ENCODE measurements at regions of chr9 and their contacts with region 1.

Region 1: DNA sequence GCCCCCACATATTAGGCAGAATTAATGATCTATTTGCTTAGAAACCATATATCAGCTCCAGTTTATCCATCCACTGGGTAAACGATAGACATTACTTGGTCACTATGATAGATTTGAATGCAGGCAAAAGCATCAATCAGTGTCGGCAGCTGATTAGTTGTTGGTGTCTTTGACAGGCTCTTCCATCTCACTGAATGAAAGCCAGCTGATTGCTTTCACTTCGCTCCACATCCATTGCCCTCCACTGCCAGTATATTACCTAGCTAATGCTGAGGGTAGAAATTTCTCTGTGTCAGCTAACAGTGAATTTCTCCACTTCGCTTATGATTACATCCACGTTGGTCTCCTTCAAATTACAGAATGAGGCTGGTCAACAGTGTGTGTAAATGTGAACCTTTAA is 821.3 kb upstream of the TYRP1 start:
- DNase-seq: no peak
- ATAC-seq: no peak
- H3K4me3 ChIP-seq: no peak overlapping the region
- H3K4me3 Mint-ChIP-seq: no peak overlapping the region
- H3K27ac ChIP-seq: no peak overlapping the region
- H3K27ac Mint-ChIP-seq: no peak overlapping the region
- H3K4me1 ChIP-seq: no peaks in the 10 kb centered on the region
- H3K4me1 Mint-ChIP-seq: no peaks in the 10 kb centered on the region
- H3K27me3 ChIP-seq: no peaks in the 10 kb centered on the region
- H3K27me3 Mint-ChIP-seq: no peaks in the 10 kb centered on the region
- CTCF ChIP-seq: no peak

Region 2: DNA sequence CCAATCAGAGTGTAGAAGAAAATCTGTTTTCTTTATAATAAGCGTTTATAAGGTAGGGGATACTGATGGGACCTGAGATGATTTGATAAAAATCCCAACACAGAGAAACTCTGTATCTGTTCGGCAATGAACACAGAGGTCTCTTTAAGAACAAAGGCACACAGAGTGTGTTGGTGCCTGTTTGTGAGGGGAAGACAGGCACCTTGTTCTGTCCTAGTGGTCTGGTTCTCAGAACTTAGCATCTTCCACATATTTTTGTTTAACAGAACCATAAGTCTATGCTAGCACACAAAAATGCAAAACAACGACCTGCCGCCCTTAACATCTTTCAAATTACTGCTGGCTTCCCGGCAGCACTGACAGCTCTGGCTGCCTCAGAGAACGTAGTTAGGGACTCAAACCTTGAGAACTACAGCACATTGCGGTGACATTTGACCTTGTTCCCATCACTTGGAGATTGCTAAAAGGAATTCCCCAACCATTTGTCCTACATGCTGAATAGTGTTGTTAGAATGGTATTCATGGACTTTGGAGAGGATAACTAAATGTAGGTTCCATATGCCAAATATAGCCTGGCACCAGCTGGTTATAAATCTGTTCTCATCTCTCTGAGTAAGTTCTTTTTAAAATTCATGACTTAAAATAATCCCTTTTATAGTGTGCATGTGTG is 50.4 kb before region 1 on chr9:
- CTCF ChIA-PET with region 1: no interaction called
- POLR2A ChIA-PET with region 1: no interaction called
- intact Hi-C with region 1: loop called in 1 of 2 experiments (anchors 5 kb)
- DNase-seq: no peak
- ATAC-seq: no peak
- H3K4me3 ChIP-seq: no peak overlapping the region
- H3K4me3 Mint-ChIP-seq: no peak overlapping the region
- H3K27ac ChIP-seq: no peak overlapping the region
- H3K27ac Mint-ChIP-seq: no peak overlapping the region
- H3K4me1 ChIP-seq: no peaks in the 10 kb centered on the region
- H3K4me1 Mint-ChIP-seq: no peaks in the 10 kb centered on the region
- H3K27me3 ChIP-seq: no peaks in the 10 kb centered on the region
- H3K27me3 Mint-ChIP-seq: no peaks in the 10 kb centered on the region
- CTCF ChIP-seq: no peak

Region 3: GRCh38 chr9:11833056-11833455 is 38.8 kb before region 1 on chr9:
- CTCF ChIA-PET with region 1: no interaction called
- POLR2A ChIA-PET with region 1: no interaction called
- intact Hi-C with region 1: loop called in 1 of 2 experiments (anchors 5 kb)
- DNase-seq: no peak
- ATAC-seq: no peak
- H3K4me3 ChIP-seq: no peak overlapping the region
- H3K4me3 Mint-ChIP-seq: no peak overlapping the region
- H3K27ac ChIP-seq: no peak overlapping the region
- H3K27ac Mint-ChIP-seq: no peak overlapping the region
- H3K4me1 ChIP-seq: no peaks in the 10 kb centered on the region
- H3K4me1 Mint-ChIP-seq: no peaks in the 10 kb centered on the region
- H3K27me3 ChIP-seq: no peaks in the 10 kb centered on the region
- H3K27me3 Mint-ChIP-seq: no peaks in the 10 kb centered on the region
- CTCF ChIP-seq: no peak